MCF 10A (cell line): ENCODE measurements at regions of chr6 and their contacts with region 1.

Region 1: DNA sequence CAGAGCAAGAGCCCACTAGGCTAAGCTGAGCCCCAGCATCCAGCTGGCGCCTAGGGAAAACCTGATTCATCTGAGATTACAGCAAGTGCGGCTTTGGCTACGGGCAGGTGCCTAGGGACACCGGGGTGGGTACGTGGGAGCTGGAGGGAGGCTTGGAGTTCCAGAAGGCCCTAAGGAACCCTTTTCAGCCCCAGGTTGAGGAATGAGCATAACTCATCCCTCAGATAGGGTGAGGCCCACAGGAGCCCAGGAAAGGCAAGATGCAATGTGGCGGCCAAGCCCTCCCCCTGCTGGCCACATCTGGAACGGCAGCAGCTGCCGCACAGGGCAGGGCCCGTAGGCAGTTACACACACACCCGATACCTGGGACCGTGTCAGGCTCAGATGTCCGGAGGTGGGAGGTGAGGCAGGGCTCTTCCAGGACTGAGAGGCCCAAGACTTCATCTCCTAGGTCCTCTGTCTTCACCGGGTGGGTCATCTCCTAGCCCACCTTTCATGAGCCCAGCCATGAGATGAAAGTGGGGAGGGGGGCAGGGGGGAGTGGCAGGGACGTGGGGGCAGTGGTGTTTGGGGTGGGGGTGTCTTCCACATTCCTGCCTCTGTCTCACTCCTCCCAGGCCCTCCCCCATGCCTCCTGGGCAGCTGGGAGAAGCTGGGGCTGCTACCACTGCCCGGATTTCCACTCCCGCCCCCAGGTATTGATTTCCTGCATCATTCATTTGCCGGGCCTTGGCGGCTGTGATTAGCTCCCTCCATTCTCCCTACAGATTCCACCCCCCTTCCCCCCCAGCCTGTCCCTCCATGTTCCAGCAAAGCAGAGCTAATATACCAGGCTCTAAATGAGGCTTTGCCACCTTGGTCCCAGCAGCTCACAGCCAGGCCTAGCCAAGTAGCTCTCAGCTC is 5.5 kb downstream of the MDGA1 start:
- DNase-seq: peak; percentile 69
- H3K4me3 Mint-ChIP-seq: no peak overlapping the region
- H3K27ac Mint-ChIP-seq: no peak overlapping the region
- H3K4me1 Mint-ChIP-seq: no peaks in the 10 kb centered on the region
- H3K27me3 Mint-ChIP-seq: peaks cover 48% of the 10 kb centered on the region
- CTCF ChIP-seq: peak; percentile 99

Region 2: GRCh38 chr6:37324131-37325033 is 367.8 kb before region 1 on chr6:
- CTCF ChIA-PET with region 1: interaction called, 17 read pairs
- POLR2A ChIA-PET with region 1: no interaction called
- intact Hi-C with region 1: loop called (anchors 2 kb)
- DNase-seq: peak; percentile 47
- H3K4me3 Mint-ChIP-seq: no peak overlapping the region
- H3K27ac Mint-ChIP-seq: no peak overlapping the region
- H3K4me1 Mint-ChIP-seq: peaks cover 11% of the 10 kb centered on the region
- H3K27me3 Mint-ChIP-seq: no peaks in the 10 kb centered on the region
- CTCF ChIP-seq: no peak

Region 3: DNA sequence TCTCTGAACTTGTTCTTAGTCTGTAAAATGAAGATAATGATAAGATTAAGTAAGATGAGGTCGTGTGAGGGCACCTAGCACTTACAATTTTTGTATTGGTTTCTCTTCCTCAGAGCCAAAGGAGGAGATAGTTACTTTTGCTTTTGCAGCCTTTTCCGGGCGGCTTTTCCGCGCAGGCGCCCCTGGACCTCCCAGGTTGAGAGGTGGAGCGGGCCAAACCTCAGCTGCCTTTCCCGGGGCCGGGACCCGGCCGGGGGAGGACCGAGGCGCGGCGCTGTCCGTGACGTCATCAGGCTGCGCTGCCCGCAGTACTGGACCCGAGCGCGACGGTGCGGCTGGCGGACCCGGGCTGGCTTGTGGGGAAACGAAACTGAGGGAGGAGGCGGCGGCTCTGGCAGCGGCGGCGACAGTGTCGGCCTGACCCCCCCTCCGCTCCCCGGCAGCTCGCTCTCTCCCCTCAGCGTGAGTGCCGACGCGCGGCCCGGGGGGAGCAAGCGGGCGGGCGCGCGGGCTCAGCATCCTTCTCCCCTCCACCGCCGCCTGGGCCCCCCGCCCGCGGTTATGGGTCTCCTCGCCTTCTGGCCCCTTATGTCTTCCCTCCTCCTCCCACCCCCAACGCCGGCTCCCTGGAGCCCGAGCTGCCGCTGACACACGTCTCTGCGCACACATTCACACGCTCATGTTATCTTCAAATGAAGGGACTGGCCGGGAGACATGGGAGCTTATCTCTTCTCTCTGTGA is 259.1 kb before region 1 on chr6 and contains the start of gene CMTR1:
- CTCF ChIA-PET with region 1: interaction called, 12 read pairs
- POLR2A ChIA-PET with region 1: interaction called, 3 read pairs
- intact Hi-C with region 1: no loop called
- DNase-seq: peak; percentile 85
- H3K4me3 Mint-ChIP-seq: peak within 1 kb of the TSS; percentile 84
- H3K27ac Mint-ChIP-seq: peak within 1 kb of the TSS; percentile 94
- H3K4me1 Mint-ChIP-seq: peaks cover 19% of the 10 kb centered on the region
- H3K27me3 Mint-ChIP-seq: peaks cover 14% of the 10 kb centered on the region
- CTCF ChIP-seq: no peak
- total RNA-seq, gene CMTR1: 24.5 and 30.5 TPM in 2 replicates

Region 4: GRCh38 chr6:37538107-37538506 is 154.0 kb before region 1 on chr6:
- CTCF ChIA-PET with region 1: interaction called, 19 read pairs
- POLR2A ChIA-PET with region 1: interaction called, 3 read pairs
- intact Hi-C with region 1: loop called (anchors 1 kb)
- DNase-seq: peak; percentile 63
- H3K4me3 Mint-ChIP-seq: no peak overlapping the region
- H3K27ac Mint-ChIP-seq: no peak overlapping the region
- H3K4me1 Mint-ChIP-seq: no peaks in the 10 kb centered on the region
- H3K27me3 Mint-ChIP-seq: peaks cover 21% of the 10 kb centered on the region
- CTCF ChIP-seq: peak; percentile 54

Region 5: DNA sequence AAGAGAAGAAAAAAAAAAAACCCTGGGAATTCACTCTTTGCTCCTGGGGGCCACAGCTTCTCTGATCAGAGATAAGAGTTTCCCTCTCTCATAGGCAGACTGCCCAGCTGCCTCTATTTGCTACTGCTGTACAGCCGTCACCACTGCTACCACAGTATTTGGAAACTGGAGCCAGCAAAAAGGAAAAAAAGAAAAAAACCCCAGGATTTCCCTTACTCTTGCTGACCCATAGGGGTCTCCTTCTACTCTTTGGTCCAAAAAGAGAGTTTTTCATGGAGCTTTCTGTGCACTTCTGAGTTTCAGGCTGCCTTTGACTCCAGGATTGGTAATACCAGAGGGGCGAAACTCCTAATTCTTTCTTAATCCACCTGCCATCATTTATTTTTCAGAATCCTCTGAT is 84.2 kb before region 1 on chr6:
- CTCF ChIA-PET with region 1: interaction called, 3 read pairs
- POLR2A ChIA-PET with region 1: no interaction called
- intact Hi-C with region 1: loop called (anchors 1 kb)
- DNase-seq: peak; percentile 18
- H3K4me3 Mint-ChIP-seq: no peak overlapping the region
- H3K27ac Mint-ChIP-seq: no peak overlapping the region
- H3K4me1 Mint-ChIP-seq: no peaks in the 10 kb centered on the region
- H3K27me3 Mint-ChIP-seq: peaks cover 62% of the 10 kb centered on the region
- CTCF ChIP-seq: peak; percentile 27

Region 6: DNA sequence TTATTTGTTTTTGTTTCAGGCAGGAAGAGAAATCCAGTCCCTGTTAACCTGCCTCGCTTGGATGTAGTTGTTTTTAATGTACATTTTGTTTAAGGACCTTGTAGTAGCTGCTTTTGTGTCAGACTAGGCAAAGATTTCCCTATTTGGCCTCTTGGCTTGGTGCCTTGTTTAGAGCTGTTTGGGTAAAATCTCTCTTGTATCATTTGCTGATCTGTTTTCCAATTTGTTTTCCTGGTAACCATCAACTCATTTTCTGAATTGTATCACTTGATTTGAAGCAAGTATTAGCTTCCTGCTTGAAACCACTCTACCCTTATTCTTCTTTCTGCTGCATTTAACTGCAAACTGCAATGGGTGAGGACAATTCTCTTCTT is 288.1 kb after region 1 on chr6:
- CTCF ChIA-PET with region 1: no interaction called
- POLR2A ChIA-PET with region 1: no interaction called
- intact Hi-C with region 1: no loop called
- DNase-seq: no peak
- H3K4me3 Mint-ChIP-seq: no peak overlapping the region
- H3K27ac Mint-ChIP-seq: no peak overlapping the region
- H3K4me1 Mint-ChIP-seq: peaks cover 16% of the 10 kb centered on the region
- H3K27me3 Mint-ChIP-seq: no peaks in the 10 kb centered on the region
- CTCF ChIP-seq: no peak

Region 7: GRCh38 chr6:38493931-38494547 is 801.9 kb after region 1 on chr6:
- CTCF ChIA-PET with region 1: interaction called, 3 read pairs
- POLR2A ChIA-PET with region 1: no interaction called
- intact Hi-C with region 1: loop called (anchors 2 kb)
- DNase-seq: peak; percentile 74
- H3K4me3 Mint-ChIP-seq: no peak overlapping the region
- H3K27ac Mint-ChIP-seq: no peak overlapping the region
- H3K4me1 Mint-ChIP-seq: no peaks in the 10 kb centered on the region
- H3K27me3 Mint-ChIP-seq: no peaks in the 10 kb centered on the region
- CTCF ChIP-seq: peak; percentile 89